Prostate gland (tissue), 2 donors: ENCODE measurements at regions of chr15 and their contacts with region 1.

Region 1: GRCh38 chr15:79896637-79897379 is at the start of gene MTHFS:
- DNase-seq: peak; percentile 62
- H3K4me3 ChIP-seq: peak within 1 kb of the TSS; percentile 65 to 80
- H3K27ac ChIP-seq: peak within 1 kb of the TSS; percentile 97 to 98
- H3K4me1 ChIP-seq: no peaks in the 10 kb centered on the region
- H3K27me3 ChIP-seq: no peaks in the 10 kb centered on the region
- CTCF ChIP-seq: peak in 3 of 4 experiments; percentile 29 to 51 (median 32)
- POLR2A ChIP-seq: peak; percentile 57
- total RNA-seq, gene MTHFS: 28.7 to 55.1 TPM

Region 2: GRCh38 chr15:79779746-79780145 is 117.1 kb before region 1 on chr15:
- intact Hi-C with region 1: no loop called
- DNase-seq: no peak
- H3K4me3 ChIP-seq: no peak overlapping the region
- H3K27ac ChIP-seq: no peak overlapping the region
- H3K4me1 ChIP-seq: peaks cover 6% of the 10 kb centered on the region
- H3K27me3 ChIP-seq: no peaks in the 10 kb centered on the region
- CTCF ChIP-seq: no peak
- POLR2A ChIP-seq: no peak

Region 3: GRCh38 chr15:79923515-79924395 is 26.9 kb after region 1 on chr15:
- intact Hi-C with region 1: loop called (anchors 2 kb)
- DNase-seq: peak; percentile 96
- H3K4me3 ChIP-seq: peak overlapping the region; percentile 66 to 84
- H3K27ac ChIP-seq: peak overlapping the region; percentile 91 to 96
- H3K4me1 ChIP-seq: no peaks in the 10 kb centered on the region
- H3K27me3 ChIP-seq: no peaks in the 10 kb centered on the region
- CTCF ChIP-seq: peak in 2 of 4 experiments; percentile 7 to 11
- POLR2A ChIP-seq: peak; percentile 80

Region 4: DNA sequence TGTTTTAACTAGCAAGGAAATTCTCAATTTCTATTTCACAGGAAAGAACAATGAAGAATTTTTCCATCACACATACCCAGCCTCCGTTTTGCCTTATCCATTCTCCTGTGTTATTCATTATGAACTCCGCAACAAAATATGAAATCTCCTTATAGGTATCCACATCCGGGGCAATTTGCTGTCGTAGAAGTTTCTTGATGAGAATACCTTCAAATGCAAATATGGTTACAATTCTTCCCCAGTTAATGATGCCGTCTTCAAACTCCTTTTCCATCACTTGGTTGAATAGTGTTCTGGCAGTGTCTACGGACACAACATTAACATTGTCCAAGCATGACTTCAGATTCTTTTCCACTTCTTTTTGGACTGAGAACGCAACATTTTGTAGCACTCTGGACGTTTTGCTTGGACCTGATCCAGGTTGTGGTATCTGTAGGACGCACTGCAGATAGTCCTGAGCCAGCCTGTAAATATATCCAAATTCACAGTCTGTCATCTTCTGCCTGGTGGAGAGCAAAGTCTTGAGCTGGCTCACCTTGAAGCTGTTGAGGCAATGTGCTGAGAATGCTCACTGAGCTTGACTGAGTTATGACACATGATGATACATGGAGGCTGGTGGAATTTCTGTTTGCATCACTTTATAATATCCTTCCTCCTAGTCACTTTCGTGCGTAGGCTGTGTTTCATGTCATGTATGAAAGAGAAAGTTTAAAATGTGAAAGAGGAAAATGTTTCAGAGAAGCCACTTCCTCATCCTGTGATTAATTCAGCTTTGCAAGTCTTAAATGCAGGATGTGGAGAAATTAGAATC is 74.0 kb after region 1 on chr15 and contains the start of gene BCL2A1:
- intact Hi-C with region 1: no loop called
- DNase-seq: no peak
- H3K4me3 ChIP-seq: no peak within 1 kb of the TSS
- H3K27ac ChIP-seq: no peak within 1 kb of the TSS
- H3K4me1 ChIP-seq: no peaks in the 10 kb centered on the region
- H3K27me3 ChIP-seq: no peaks in the 10 kb centered on the region
- CTCF ChIP-seq: no peak
- POLR2A ChIP-seq: peak; percentile 19
- total RNA-seq, gene BCL2A1: 0.57 to 2.7 TPM

Region 5: GRCh38 chr15:79989682-79990081 is 92.9 kb after region 1 on chr15:
- intact Hi-C with region 1: loop called (anchors 10 kb)
- DNase-seq: no peak
- H3K4me3 ChIP-seq: no peak overlapping the region
- H3K27ac ChIP-seq: no peak overlapping the region
- H3K4me1 ChIP-seq: no peaks in the 10 kb centered on the region
- H3K27me3 ChIP-seq: no peaks in the 10 kb centered on the region
- CTCF ChIP-seq: no peak
- POLR2A ChIP-seq: no peak

Region 6: GRCh38 chr15:80173022-80173759 is 276.4 kb after region 1 on chr15:
- intact Hi-C with region 1: loop called (anchors 5 kb)
- DNase-seq: peak; percentile 79
- H3K4me3 ChIP-seq: no peak overlapping the region
- H3K27ac ChIP-seq: peak overlapping the region in 1 of 2 donors; percentile 44
- H3K4me1 ChIP-seq: no peaks in the 10 kb centered on the region
- H3K27me3 ChIP-seq: no peaks in the 10 kb centered on the region
- CTCF ChIP-seq: peak in 3 of 4 experiments; percentile 58 to 79 (median 79)
- POLR2A ChIP-seq: no peak